Activated CD8-positive, alpha-beta T cell treated with anti-CD3 and anti-CD28 coated beads for 36 hours (primary cell): ENCODE measurements at regions of chr12 and their contacts with region 1.

Region 1: DNA sequence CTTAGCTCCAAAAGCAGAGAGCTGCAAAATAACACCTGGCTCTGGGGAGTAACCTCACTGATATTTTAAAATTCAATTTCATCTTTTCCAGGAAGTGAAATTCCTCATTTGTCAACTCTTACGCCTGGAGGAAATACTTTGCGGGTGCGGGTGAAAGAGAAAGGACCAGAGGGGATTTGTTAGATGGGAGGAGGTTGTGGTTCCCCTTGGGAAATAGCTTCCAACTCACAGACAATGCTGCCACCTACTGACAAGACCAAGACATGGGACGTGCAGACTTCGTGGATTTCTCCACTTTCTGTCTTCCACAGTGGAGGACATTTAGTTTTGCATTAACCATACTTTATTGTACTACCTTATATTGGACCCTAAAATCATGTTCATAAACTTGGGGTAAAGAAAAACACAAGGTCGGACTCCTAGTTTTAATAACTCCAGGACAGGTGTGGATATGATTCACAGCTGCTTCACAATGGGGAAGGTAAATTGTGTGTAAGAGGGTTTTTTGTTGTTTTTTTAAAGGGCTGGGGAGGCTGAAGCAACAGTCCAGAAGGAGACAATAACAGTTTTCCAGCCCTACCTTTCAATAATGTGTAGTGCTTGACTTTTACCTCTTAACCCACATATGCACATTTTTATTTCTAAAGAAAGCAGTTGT is 10.8 kb downstream of the FBXL14 start:
- DNase-seq: peak; percentile 77
- ATAC-seq: peak; percentile 79
- H3K4me3 Mint-ChIP-seq: no peak overlapping the region
- H3K27ac Mint-ChIP-seq: no peak overlapping the region
- H3K4me1 Mint-ChIP-seq: peaks cover 21% of the 10 kb centered on the region
- H3K27me3 Mint-ChIP-seq: no peaks in the 10 kb centered on the region
- CTCF ChIP-seq: peak; percentile 97

Region 2: DNA sequence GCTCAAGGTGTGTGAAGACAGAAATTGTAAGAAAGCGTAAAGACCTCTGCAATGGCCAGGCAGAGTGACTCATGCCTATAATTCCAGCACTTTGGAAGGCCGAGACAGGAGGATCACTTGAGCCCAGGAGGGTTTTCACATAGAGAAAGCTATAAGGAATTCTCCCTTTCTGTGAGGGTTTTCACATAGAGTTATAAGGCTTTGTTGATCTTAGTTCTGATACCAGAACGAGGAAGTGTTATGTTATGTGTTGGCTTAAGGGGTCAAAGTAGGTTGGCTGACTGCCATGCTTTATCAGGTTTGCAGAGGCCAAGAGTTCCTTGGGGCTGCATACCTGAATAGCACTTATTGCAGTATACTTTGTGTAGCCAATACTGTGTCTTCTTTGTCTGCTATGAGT is 453.4 kb before region 1 on chr12:
- CTCF ChIA-PET with region 1: interaction called, 13 read pairs
- POLR2A ChIA-PET with region 1: no interaction called
- intact Hi-C with region 1: no loop called
- DNase-seq: peak; percentile 22
- ATAC-seq: peak; percentile 34
- H3K4me3 Mint-ChIP-seq: no peak overlapping the region
- H3K27ac Mint-ChIP-seq: no peak overlapping the region
- H3K4me1 Mint-ChIP-seq: peaks cover 39% of the 10 kb centered on the region
- H3K27me3 Mint-ChIP-seq: no peaks in the 10 kb centered on the region
- CTCF ChIP-seq: no peak

Region 3: DNA sequence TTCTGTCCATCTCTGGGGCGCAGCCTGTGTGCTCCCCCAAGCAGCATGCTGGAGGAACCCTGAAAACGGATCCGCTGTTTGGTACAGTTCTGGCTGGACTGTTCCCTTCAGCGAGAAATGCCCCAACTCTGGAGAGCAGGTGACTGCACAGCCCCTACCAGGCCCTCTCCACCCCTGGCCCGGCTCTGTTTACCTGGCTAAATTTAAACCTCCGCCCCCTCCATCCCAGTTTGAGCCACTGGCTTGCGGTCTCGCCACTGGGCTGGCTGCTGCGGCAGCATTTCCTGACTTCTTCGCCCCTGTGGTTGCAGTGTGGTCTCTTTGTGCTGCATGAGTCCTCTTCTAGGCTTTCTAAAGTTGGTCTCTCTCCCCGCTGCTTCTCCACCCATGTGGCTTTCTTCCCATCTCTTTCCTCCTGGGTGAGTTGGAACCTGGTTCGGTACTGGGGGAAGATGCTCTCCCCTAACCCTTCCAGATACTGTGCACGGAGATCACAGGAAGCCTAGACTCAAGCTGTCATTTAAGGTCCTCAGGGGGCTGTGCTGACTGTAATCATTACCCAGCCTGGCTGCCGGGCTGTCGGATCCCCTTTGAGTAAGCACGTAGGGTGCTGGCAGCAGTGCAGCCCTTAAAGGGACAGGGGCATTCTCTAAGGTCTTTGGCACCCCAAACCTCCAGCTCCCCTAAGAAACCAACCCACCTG is 49.8 kb before region 1 on chr12:
- CTCF ChIA-PET with region 1: interaction called, 30 read pairs
- POLR2A ChIA-PET with region 1: no interaction called
- intact Hi-C with region 1: no loop called
- DNase-seq: peak; percentile 80
- ATAC-seq: peak; percentile 84
- H3K4me3 Mint-ChIP-seq: peak overlapping the region; percentile 62
- H3K27ac Mint-ChIP-seq: no peak overlapping the region
- H3K4me1 Mint-ChIP-seq: peaks cover 32% of the 10 kb centered on the region
- H3K27me3 Mint-ChIP-seq: peaks cover 69% of the 10 kb centered on the region
- CTCF ChIP-seq: peak; percentile 9

Region 4: GRCh38 chr12:1594261-1595025 is 10.9 kb after region 1 on chr12 and contains the start of gene FBXL14:
- CTCF ChIA-PET with region 1: interaction called, 30 read pairs
- POLR2A ChIA-PET with region 1: interaction called, 3 read pairs
- intact Hi-C with region 1: no loop called
- DNase-seq: peak; percentile 92
- ATAC-seq: peak; percentile 64
- H3K4me3 Mint-ChIP-seq: peak within 1 kb of the TSS; percentile 95
- H3K27ac Mint-ChIP-seq: peak within 1 kb of the TSS; percentile 88
- H3K4me1 Mint-ChIP-seq: peaks cover 29% of the 10 kb centered on the region
- H3K27me3 Mint-ChIP-seq: no peaks in the 10 kb centered on the region
- CTCF ChIP-seq: no peak
- total RNA-seq, gene FBXL14: 23.3 to 25.1 TPM

Region 5: DNA sequence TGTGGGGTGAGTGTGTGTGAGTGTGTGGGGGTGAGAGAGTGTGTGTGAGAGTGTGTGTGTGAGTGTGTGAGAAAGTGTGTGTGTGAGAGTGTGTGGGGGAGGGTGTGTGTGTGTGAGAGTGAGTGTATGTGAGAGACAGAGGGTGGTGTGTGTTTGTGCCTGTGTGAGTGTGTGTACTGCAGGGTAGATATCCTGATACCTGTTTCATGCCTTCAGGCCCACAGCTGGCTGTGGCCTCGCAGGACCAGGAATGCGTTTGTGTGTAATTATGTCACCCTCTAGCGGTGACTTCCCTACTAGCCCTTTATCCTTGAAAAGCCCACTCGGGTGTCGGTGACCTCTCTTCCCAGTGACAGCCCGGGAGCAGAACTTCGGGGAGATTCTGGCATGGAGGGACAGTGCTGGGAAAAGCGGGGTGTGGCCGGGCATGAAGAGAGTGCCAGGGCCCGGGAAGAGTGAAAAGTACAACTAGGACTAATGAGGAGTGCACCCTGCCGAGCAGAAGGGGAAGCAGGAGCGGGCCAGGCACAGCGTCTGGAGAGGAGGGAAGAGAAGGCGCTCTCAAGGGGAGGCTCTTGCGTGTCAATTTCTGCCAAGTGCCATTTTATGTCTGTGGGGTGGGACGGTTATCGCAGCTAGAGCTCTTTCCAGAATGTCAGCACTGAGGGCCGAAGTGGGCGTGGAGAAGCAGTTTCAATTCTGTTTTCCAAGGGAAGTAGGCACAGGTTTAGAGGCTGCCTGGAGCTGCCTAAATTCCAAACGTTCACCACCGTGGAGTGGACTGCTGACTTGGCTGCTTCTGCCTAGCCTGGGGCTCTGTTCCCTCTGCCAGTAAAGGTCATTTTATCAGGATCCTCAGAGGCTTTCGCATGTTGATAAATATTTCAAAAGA is 21.8 kb after region 1 on chr12:
- CTCF ChIA-PET with region 1: interaction called, 27 read pairs
- POLR2A ChIA-PET with region 1: interaction called, 5 read pairs
- intact Hi-C with region 1: no loop called
- DNase-seq: peak; percentile 67
- ATAC-seq: peak; percentile 68
- H3K4me3 Mint-ChIP-seq: peak overlapping the region; percentile 68
- H3K27ac Mint-ChIP-seq: peak overlapping the region; percentile 73
- H3K4me1 Mint-ChIP-seq: peaks cover 33% of the 10 kb centered on the region
- H3K27me3 Mint-ChIP-seq: peaks cover 1% of the 10 kb centered on the region
- CTCF ChIP-seq: peak; percentile 83

Region 6: DNA sequence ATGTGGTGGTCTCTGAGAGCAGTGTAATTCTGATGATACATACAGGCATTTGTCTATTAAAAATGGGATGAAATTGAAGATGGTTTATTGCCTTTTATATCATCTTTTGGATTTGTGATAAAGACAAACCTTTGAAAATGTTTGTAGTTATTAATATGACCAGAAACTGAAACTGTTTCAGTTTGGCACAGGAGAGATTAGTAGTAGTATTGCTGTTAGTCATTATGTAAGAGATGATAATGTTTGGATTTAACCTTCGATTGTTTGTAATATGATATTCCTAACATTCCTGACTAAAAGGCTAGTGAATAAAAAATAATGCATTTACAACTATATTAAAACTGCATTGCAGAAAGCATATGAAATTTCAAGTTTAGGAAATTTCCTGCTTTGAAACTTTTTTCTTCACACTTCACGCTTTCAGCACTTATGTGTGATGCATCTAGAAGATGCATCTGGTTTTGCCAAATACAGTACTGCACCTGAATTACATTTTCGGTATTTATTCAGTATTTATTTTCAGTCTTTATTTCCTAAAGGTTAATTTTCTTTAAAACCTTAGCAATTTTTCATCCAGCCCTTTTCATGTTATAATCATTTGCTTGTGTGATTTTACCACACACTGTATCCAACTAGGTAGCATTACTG is 132.8 kb after region 1 on chr12:
- CTCF ChIA-PET with region 1: no interaction called
- POLR2A ChIA-PET with region 1: no interaction called
- intact Hi-C with region 1: no loop called
- DNase-seq: no peak
- ATAC-seq: no peak
- H3K4me3 Mint-ChIP-seq: no peak overlapping the region
- H3K27ac Mint-ChIP-seq: no peak overlapping the region
- H3K4me1 Mint-ChIP-seq: peaks cover 43% of the 10 kb centered on the region
- H3K27me3 Mint-ChIP-seq: no peaks in the 10 kb centered on the region
- CTCF ChIP-seq: no peak